ENCODE measurements at regions of chr22 and their contacts with region 1.

Region 1: DNA sequence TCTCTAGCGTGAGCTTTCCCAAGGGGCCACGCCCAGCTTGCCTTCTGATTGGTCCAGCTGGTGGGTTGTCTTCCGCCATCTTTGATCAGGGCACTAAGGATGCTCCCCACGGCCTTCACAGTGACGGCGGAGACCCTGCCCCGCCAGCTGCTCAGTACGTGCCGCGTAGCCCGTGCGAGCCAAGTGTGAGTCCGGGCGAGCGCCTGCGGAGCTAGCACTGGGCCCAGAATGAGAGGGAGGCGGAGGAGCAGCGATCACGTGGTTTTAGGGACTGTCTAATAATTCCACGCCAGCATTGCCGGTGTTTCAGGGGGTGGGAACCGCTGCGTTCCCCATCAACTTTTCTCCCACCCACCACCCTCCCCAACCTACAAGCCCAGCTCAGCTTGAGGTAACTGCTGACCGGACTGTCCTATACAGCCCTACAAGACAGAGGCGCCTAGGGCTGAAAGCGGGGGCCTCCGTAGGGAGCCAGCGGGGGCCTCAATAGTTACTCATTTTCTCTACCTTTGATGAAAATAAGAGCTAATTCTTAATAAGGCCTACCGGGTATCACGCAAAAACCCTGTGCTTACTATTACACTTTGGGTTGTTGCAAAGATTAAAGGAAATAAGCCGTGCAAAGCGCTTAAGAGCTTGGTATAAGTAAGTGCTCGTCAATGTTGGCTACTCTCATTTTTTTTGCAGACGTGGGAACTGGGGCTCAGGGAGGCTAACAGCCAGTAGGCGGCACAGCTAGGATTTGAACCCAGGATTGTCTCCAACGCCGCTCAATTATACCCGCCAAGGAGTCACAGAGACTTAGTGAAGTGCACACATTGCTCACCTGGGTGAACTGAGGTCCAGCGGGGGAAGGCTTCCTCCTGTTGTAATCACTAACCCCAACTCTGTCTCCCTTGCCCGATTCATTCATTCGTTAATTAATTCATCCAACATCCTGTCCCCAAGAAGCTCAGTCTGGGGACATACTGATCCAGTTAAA is 1.3 kb upstream of the MTFP1 start:
- DNase-seq: peak; percentile 96 to 100 (median 99)

Region 2: DNA sequence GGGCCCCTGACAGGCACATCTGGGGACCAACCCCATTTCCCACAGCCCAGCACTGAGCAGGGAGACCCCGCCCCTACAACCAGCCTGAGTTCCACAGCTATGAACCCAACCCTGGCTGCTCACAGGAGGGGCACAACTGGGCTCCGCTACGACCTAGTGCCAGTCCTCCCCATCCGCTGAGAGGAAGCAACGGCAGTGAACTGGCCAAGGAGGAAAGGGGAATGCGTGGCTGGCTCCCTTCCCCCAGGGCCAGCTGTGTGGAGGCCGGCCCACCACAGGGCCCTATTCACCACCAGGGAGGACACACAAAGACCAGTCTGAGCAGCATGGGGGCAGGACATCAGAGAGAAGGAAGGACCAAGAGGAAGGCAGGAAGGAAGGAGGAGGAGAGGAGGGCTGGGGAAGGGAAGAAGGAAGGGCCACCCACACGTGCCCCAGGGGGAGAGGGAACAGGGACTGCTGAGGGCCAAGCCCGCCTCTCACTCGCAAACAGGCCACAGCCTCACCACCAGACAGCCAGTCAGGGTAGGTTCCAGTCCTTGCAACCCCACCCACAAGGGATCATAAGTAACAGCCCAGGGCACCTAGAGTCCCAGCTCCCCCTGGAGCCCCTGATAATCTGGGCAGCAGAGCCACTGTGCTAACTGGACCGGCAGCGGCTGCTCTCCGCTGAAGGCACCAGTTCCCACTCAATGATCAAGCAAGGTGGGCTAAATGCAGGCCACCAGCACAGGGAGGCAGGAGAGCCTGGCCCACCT is 158.7 kb after region 1 on chr22:
- intact Hi-C with region 1: loop called (anchors 10 kb)
- DNase-seq: peak in 39 of 42 donors; percentile 28 to 84 (median 59)

Measured in head of caudate nucleus (tissue), 42 donors.